Panc1 (cell line): ENCODE measurements at regions of chr5 and their contacts with region 1.

Region 1: DNA sequence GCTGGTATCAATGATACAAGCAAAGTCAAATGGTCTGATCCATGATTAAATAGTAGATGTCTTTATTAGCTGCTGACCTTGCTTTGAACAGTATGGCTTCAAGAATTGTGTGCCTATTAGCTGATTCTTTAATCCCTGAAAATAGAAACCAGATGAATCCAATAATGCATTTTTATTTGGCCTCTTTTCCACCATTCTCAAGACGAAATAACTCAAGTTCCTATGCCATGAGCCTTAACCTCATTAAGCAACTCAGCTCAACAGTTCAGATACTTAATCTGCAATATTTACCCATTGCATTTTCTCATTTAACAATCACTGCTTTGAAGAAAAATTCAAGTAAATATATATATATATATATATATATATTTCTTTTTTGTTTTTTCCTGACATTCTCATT is 588.6 kb upstream of the MEF2C start:
- DNase-seq: no peak
- ATAC-seq: no peak
- H3K4me3 ChIP-seq: no peak overlapping the region
- H3K27ac ChIP-seq: no peak overlapping the region
- H3K4me1 ChIP-seq: no peaks in the 10 kb centered on the region
- H3K27me3 ChIP-seq: no peaks in the 10 kb centered on the region
- CTCF ChIP-seq: no peak

Region 2: DNA sequence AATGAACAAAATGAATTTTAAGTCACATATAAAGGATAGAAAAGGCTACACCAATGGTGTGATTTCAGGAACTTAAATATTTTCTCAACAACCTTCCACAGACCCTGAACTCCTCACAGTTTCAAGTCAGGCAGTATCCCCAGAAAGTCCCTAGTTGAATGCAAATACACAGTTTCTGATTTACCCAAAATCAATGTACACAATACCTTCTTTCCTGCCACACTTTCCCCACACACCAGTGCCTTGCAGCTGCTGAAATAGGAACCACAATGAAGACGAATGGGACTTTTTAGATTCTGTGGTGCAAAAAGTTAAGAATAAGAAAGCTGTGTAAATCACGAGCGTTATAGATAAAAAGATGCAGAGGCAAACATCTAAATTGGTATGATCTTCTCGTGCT is 36.2 kb before region 1 on chr5:
- CTCF ChIA-PET with region 1: no interaction called
- POLR2A ChIA-PET with region 1: no interaction called
- in situ Hi-C with region 1: no loop called
- intact Hi-C with region 1: no loop called
- DNase-seq: no peak
- ATAC-seq: no peak
- H3K4me3 ChIP-seq: no peak overlapping the region
- H3K27ac ChIP-seq: no peak overlapping the region
- H3K4me1 ChIP-seq: no peaks in the 10 kb centered on the region; the same call in 1 of the 2 replicates
- H3K27me3 ChIP-seq: no peaks in the 10 kb centered on the region
- CTCF ChIP-seq: no peak

Region 3: DNA sequence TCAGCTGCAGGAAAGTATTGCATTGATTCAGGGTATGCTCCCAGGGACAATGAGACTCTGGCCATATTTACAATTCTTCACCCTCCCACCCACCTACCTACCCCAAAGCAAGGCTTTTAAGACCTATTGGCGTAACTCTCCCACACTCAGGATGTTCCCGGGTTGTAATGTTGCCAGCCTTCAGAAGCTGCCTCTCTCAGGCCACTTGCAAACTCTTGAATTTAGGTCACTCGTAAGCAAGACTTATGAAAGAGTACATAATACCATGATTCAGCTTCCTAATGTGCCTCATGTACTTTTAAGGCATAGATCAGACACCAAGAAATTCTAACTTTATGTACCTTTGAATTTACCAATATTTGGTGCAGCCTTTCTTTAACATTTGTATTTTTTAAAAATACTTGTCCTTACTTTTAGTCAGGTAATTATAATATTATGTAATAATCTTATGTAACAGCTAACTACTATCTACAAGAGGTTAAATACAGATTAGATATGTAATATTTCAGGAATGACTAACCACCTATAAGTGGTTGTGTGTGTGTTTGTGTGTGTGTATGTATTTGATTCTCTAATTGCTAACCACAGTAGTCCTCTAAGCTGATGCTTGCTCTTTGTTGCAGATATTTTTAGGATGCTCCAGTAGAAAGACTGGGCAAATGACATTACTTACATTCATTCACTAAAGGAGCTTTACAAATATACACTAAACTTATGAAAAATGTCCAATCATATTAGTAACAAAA is 41.9 kb after region 1 on chr5:
- CTCF ChIA-PET with region 1: no interaction called
- POLR2A ChIA-PET with region 1: no interaction called
- in situ Hi-C with region 1: no loop called
- intact Hi-C with region 1: loop called (anchors 1 kb)
- DNase-seq: no peak
- ATAC-seq: no peak
- H3K4me3 ChIP-seq: no peak overlapping the region
- H3K27ac ChIP-seq: no peak overlapping the region
- H3K4me1 ChIP-seq: no peaks in the 10 kb centered on the region
- H3K27me3 ChIP-seq: no peaks in the 10 kb centered on the region
- CTCF ChIP-seq: no peak